ENCODE measurements at regions of chr13 and their contacts with region 1.

Region 1: GRCh38 chr13:112587764-112588489 is at the start of gene TUBGCP3:
- DNase-seq: peak; percentile 78
- ATAC-seq: peak; percentile 90
- H3K4me3 ChIP-seq: peak within 1 kb of the TSS; percentile 83
- H3K27ac ChIP-seq: peak within 1 kb of the TSS; percentile 90
- H3K4me1 ChIP-seq: 0 out of 2 replicates have a peak, but pooled peaks cover 3% of the 10 kb centered on the region
- H3K27me3 ChIP-seq: no peaks in the 10 kb centered on the region
- CTCF ChIP-seq: no peak
- POLR2A ChIP-seq: peak; percentile 51; the same call in 1 of the 2 replicates
- RAD21 ChIP-seq: peak; percentile 27; the same call in 1 of the 2 replicates
- total RNA-seq, gene TUBGCP3: 14.7 and 16.0 TPM in 2 replicates

Region 2: GRCh38 chr13:112859817-112860190 is 271.9 kb after region 1 on chr13:
- CTCF ChIA-PET with region 1: no interaction called
- POLR2A ChIA-PET with region 1: interaction called, 16 read pairs
- dilution Hi-C with region 1: no loop called
- in situ Hi-C with region 1: no loop called
- intact Hi-C with region 1: no loop called
- DNase-seq: peak; percentile 82
- ATAC-seq: peak; percentile 59
- H3K4me3 ChIP-seq: no peak overlapping the region
- H3K27ac ChIP-seq: no peak overlapping the region
- H3K4me1 ChIP-seq: peaks cover 3% of the 10 kb centered on the region
- H3K27me3 ChIP-seq: no peaks in the 10 kb centered on the region
- CTCF ChIP-seq: no peak
- POLR2A ChIP-seq: no peak
- RAD21 ChIP-seq: no peak